Left cardiac atrium (tissue), 4 donors: ENCODE measurements at regions of chr16 and their contacts with region 1.

Region 1: GRCh38 chr16:49592546-49593423 is 219.2 kb downstream of the C16orf78 start:
- DNase-seq: no peak
- ATAC-seq: peak in 1 of 2 donors; percentile 51

Region 2: DNA sequence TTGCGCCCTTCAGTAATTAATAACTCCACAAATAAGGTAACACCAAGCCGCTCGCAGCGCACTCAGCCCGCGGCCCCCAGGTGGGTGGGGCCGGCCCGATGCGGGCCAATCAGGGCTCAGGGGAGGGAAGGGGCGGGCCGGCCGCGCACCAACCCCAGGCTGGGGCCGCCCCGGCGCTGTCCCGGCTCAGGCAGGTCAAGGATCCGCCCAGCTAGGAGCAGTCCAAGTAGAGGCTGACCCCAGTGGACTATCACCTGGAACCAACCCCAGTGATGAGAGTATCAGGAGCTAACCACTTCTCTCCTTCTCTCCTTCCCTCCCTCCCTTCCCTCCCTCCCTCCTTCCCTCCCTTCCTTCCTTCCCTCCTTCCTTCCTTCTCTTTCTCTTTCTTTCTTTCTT is 108.3 kb before region 1 on chr16:
- intact Hi-C with region 1: loop called in 1 of 2 experiments (anchors 10 kb)
- DNase-seq: peak; percentile 81
- ATAC-seq: peak; percentile 100